Panc1 (cell line): ENCODE measurements at regions of chr5 and their contacts with region 1.

Region 1: GRCh38 chr5:150161242-150162141 is 5.1 kb upstream of the CDX1 start:
- DNase-seq: peak; percentile 64
- ATAC-seq: peak; percentile 92
- H3K4me3 ChIP-seq: peak overlapping the region in 1 of 2 experiments; percentile 27; a peak in 2 of 4 replicates
- H3K27ac ChIP-seq: no peak overlapping the region
- H3K4me1 ChIP-seq: no peaks in the 10 kb centered on the region
- H3K27me3 ChIP-seq: no peaks in the 10 kb centered on the region
- CTCF ChIP-seq: peak; percentile 98

Region 2: DNA sequence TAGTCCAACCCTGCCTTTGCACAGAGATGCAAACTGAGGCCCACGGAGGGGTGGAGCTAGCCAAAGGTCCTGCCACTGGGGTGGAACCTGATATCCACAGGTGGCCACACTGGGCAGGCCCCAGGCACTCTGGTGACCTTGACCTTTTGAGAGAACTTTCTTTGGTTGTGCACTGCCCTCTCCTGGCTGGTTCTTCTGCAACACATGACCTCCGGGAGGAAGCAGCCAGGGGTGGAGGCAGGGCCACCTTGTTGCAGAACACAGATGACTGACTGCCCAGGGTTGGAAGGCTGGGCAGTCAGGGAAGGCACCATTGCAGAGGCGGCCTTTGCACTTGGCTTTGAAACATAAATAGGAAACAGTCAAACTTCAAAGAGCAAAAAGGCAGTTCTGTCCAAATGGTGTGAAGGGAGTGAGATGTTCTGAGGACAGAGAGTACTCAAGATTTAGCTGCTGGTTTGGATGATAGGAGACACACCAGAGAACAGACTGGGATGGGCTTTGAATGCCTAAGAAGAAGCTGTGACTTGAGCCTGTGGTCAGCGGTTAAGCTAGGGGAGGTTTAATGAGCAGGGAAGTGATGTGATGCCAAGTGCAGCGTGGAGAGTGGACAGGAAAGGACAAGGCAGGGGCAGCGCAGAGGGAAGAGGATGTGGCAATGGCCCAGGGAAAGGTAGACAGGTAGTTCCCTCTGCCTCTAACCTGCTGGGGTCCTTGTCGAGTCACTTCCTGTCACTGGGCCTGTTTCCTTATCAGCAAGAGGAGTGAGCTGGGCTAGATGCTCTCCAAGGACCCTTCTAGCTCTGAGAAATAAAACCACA is 189.2 kb after region 1 on chr5:
- CTCF ChIA-PET with region 1: no interaction called
- POLR2A ChIA-PET with region 1: no interaction called
- in situ Hi-C with region 1: no loop called
- intact Hi-C with region 1: loop called (anchors 2 kb)
- DNase-seq: peak; percentile 77
- ATAC-seq: peak; percentile 93
- H3K4me3 ChIP-seq: no peak overlapping the region
- H3K27ac ChIP-seq: peak overlapping the region; percentile 32; the same call in 1 of the 2 replicates
- H3K4me1 ChIP-seq: peaks cover 17% of the 10 kb centered on the region
- H3K27me3 ChIP-seq: no peaks in the 10 kb centered on the region
- CTCF ChIP-seq: peak; percentile 85